ENCODE measurements at regions of chr20 and their contacts with region 1.

Region 1: DNA sequence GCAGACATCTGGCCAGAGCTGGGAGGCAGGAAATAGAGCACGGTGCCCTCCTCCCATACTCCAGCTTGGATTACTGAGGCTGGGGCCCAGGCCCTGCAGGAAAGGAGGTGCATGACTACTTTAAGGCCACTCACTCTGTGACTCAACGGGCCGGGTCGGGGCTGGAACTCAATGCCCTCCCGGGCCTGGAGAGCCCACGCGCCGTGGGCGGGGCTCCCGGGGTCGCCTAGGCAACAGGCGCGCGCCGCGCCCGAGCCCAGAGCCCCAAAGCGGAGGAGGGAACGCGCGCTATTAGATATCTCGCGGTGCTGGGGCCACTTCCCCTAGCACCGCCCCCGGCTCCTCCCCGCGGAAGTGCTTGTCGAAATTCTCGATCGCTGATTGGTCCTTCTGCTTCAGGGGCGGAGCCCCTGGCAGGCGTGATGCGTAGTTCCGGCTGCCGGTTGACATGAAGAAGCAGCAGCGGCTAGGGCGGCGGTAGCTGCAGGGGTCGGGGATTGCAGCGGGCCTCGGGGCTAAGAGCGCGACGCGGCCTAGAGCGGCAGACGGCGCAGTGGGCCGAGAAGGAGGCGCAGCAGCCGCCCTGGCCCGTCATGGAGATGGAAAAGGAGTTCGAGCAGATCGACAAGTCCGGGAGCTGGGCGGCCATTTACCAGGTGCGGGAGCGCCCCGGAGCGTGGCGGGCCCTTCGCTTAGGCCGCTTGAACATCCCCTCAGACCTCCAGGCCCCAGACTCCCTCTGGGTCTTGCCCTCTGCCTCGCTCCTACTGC is at the start of gene PTPN1:
- DNase-seq: peak; percentile 99
- ATAC-seq: peak; percentile 99
- H3K4me3 ChIP-seq: peak within 1 kb of the TSS; percentile 71 to 80
- H3K27ac ChIP-seq: peak within 1 kb of the TSS in 1 of 2 donors; percentile 69
- H3K4me1 ChIP-seq: peaks cover 2 to 7% of the 10 kb centered on the region in 2 donors
- H3K27me3 ChIP-seq: no peaks in the 10 kb centered on the region
- total RNA-seq, gene PTPN1: 31.2 to 51.6 TPM

Region 2: DNA sequence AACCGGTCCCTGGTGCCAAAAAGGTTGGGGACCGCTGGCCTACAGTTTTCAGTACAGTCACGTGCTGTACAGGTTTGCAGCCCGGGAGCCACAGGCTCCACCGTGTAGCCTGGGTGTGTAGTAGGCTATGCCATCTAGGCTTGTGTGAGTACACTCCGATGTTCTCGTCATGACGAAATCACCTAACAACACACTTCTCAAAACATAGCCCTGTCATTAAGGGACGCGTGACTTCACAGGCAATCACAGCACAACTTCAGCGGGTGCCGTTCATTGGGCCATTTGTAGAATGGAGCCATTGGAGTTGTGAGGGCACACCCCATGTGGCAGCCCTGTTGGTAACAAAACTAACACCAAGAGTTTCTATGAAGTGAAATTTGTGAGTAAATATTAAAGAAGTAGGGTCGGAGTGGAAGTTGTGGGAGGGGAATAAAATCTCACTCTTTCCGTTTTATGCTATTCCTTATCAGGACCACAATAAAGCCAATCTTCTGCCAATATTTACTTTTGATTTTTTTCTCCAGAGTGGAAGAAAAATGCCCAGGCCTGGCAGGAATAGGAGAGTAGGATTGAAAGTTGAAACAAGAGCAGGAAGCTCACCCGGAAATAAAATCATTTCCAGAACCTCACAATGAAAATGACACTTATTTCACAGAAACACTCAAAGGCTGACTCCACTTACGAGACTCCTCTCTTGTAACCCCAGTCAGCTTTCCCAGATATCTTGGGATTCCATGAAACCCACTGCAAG is 63.6 kb before region 1 on chr20:
- intact Hi-C with region 1: no loop called
- DNase-seq: peak; percentile 27 to 41
- ATAC-seq: peak; percentile 31
- H3K4me3 ChIP-seq: no peak overlapping the region
- H3K27ac ChIP-seq: no peak overlapping the region
- H3K4me1 ChIP-seq: no peaks in the 10 kb centered on the region
- H3K27me3 ChIP-seq: no peaks in the 10 kb centered on the region

Region 3: GRCh38 chr20:50561379-50562078 is 51.4 kb after region 1 on chr20:
- intact Hi-C with region 1: loop called in 1 of 2 experiments (anchors 5 kb)
- DNase-seq: peak in 1 of 2 donors; percentile 87
- ATAC-seq: peak; percentile 72
- H3K4me3 ChIP-seq: no peak overlapping the region
- H3K27ac ChIP-seq: peak overlapping the region; percentile 37 to 94
- H3K4me1 ChIP-seq: peaks cover 0 to 7% of the 10 kb centered on the region in 2 donors
- H3K27me3 ChIP-seq: no peaks in the 10 kb centered on the region

Region 4: DNA sequence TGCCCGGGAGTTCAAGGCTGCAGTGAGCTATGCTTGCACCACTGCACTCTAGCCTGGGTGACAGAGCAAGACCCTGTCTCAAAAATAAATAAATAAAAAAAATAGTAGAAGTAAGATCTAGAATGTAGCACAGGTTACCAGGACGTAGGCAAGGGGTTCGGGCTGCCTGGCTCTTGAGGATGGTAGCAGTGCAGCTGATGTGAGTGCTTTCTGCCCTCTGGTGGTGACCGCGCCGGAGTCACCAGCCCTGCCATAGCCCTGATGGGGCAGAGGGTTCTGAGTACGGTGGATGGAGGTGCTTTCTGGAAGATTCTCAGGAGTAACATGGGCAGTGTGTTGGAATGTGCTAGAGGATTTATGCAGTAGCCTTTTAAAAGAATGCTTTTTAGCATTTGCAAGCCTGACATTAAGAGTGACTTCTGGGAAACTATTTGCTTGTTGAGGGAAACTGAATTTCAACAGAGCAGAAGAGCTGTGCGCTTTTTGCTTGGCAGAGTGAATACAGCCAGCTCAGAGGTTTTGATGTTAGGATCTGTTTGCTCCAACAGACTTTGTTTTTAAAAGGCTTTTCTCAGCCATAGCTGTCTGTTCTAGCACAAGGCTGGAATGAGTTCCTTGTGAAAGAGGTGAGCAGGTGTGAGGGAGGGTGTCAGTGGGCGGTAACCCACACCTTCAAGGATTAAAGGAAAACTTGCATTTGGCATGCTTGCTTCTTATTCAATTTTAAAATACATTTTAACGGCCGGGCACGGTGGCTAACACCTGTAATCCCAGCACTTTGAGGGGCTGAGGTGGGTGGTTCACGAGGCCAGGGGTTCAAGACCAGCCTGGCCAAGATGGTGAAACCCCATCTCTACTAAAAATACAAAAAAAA is 66.0 kb after region 1 on chr20:
- intact Hi-C with region 1: loop called (anchors 2 to 5 kb)
- DNase-seq: peak; percentile 79 to 84
- ATAC-seq: peak; percentile 71
- H3K4me3 ChIP-seq: no peak overlapping the region
- H3K27ac ChIP-seq: no peak overlapping the region
- H3K4me1 ChIP-seq: peaks cover 0 to 3% of the 10 kb centered on the region in 2 donors
- H3K27me3 ChIP-seq: no peaks in the 10 kb centered on the region

Region 5: GRCh38 chr20:50744143-50744792 is 234.1 kb after region 1 on chr20:
- intact Hi-C with region 1: loop called in 1 of 2 experiments (anchors 10 kb)
- DNase-seq: peak in 1 of 2 donors; percentile 71
- ATAC-seq: peak; percentile 91
- H3K4me3 ChIP-seq: no peak overlapping the region
- H3K27ac ChIP-seq: peak overlapping the region in 1 of 2 donors; percentile 75
- H3K4me1 ChIP-seq: no peaks in the 10 kb centered on the region
- H3K27me3 ChIP-seq: no peaks in the 10 kb centered on the region